OCI-LY7 (cell line): ENCODE measurements at regions of chr7 and their contacts with region 1.

Region 1: DNA sequence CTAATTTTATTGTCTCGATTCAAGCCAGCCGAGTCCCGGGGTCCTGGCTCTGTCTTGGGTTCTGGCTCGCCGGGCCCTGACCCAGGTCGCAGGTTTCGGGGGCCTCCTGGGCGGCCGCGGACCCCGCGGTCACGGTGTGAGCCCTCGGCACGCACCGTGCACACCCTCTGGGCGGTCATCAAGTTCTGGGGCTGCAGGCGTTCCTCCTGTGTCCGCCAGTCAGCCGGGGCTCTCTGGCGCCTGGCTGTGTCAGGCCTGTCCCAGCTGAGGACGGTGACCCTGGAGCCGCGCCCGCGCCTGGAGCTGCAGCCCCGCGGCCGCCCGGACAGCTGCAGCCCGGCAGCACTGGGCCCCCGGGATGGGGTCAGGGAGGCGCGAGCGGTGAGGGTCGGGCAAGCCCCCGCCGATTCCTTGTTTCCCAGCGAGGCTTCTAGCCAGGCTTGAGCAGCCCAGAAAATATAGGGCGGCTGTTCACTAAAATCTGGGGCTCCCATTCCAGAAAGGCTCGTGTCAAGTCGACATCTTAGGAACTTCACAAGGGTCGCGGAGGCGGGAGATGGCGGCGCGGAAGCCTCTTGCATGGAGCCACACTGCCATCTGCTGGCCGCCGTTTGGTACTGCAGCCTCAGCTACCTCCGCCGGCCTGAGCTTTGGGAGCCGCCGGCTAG is 4.2 kb upstream of the HOXA7 start:
- DNase-seq: peak; percentile 88
- H3K4me3 ChIP-seq: peak overlapping the region; percentile 67
- H3K27ac ChIP-seq: no peak overlapping the region
- H3K4me1 ChIP-seq: peaks cover 15% of the 10 kb centered on the region
- CTCF ChIP-seq: peak; percentile 94

Region 2: GRCh38 chr7:25851332-25852210 is 1309.1 kb before region 1 on chr7:
- CTCF ChIA-PET with region 1: no interaction called
- POLR2A ChIA-PET with region 1: no interaction called
- intact Hi-C with region 1: no loop called
- DNase-seq: peak; percentile 81
- H3K4me3 ChIP-seq: no peak overlapping the region
- H3K27ac ChIP-seq: no peak overlapping the region
- H3K4me1 ChIP-seq: peaks cover 16% of the 10 kb centered on the region
- CTCF ChIP-seq: peak; percentile 99

Region 3: DNA sequence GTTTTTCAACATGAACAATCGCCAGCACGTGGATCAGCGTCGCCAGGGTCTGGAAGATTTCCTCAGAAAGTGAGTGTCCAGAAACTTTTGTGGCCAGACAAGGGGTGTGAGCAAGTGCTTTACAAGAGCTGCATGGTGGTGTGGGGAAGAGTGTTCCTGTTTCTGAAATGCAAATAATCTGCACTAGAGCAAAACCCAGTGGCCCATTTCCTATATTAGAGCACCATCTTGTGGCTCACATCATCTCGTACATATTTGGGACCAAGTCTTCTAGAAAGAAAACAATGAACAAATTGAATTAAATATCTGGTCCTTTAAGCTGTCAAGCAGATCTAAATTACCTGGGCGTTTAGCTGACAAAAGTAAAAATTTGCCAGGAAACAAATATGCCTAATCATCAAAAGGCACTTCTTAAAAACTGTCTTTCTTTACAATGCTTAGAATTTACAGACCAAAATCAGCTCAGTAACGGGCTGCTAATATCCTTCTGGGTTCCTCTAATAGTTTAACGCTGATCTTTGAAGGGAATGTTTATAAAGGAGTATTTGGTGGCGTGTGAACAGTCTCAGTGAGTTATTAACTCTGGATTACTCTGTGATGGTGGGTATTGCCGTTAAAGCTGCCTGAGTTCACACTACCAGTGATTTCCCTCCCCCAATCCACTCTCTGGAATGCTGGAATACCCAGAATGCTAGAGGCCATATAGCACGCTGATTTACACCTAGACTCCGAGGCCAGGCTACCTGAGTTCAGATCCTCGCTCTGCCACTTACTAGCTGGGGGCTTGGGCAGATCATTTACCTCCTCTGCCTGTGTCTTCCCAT is 795.4 kb before region 1 on chr7:
- CTCF ChIA-PET with region 1: no interaction called
- POLR2A ChIA-PET with region 1: no interaction called
- intact Hi-C with region 1: loop called (anchors 1 kb)
- DNase-seq: peak; percentile 89
- H3K4me3 ChIP-seq: no peak overlapping the region
- H3K27ac ChIP-seq: peak overlapping the region; percentile 29
- H3K4me1 ChIP-seq: peaks cover 21% of the 10 kb centered on the region
- CTCF ChIP-seq: peak; percentile 93

Region 4: GRCh38 chr7:26500749-26501352 is 659.8 kb before region 1 on chr7:
- CTCF ChIA-PET with region 1: no interaction called
- POLR2A ChIA-PET with region 1: no interaction called
- intact Hi-C with region 1: loop called (anchors 5 kb)
- DNase-seq: peak; percentile 72
- H3K4me3 ChIP-seq: no peak overlapping the region
- H3K27ac ChIP-seq: no peak overlapping the region
- H3K4me1 ChIP-seq: no peaks in the 10 kb centered on the region
- CTCF ChIP-seq: peak; percentile 90

Region 5: DNA sequence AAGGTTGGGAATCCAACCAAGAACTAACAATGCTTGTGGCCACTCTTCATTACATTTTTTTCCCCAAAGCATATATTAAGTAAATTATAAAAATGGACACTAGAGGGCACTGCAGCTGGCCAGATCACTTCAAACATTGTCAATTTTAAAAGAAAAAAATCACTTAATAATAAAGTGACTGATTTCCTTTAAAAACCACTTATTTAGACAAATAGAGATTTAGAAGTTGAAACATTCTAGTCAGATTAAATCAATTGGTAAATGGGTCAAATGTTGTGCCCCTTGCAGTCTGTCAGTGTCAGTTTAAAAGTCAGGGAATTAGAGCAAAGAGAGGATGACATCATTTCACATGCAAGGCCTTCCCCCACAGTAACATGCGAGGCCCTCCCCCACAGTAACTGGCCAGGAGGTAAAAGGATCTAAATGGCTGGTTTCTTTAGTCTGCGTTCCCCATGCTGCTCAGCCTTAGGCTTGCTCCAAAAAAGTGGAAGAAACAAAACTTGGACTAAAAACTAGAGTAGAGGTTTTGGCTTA is 474.2 kb before region 1 on chr7:
- CTCF ChIA-PET with region 1: interaction called, 4 read pairs
- POLR2A ChIA-PET with region 1: no interaction called
- intact Hi-C with region 1: loop called (anchors 1 kb)
- DNase-seq: peak; percentile 45
- H3K4me3 ChIP-seq: no peak overlapping the region
- H3K27ac ChIP-seq: no peak overlapping the region
- H3K4me1 ChIP-seq: peaks cover 12% of the 10 kb centered on the region
- CTCF ChIP-seq: peak; percentile 93

Region 6: DNA sequence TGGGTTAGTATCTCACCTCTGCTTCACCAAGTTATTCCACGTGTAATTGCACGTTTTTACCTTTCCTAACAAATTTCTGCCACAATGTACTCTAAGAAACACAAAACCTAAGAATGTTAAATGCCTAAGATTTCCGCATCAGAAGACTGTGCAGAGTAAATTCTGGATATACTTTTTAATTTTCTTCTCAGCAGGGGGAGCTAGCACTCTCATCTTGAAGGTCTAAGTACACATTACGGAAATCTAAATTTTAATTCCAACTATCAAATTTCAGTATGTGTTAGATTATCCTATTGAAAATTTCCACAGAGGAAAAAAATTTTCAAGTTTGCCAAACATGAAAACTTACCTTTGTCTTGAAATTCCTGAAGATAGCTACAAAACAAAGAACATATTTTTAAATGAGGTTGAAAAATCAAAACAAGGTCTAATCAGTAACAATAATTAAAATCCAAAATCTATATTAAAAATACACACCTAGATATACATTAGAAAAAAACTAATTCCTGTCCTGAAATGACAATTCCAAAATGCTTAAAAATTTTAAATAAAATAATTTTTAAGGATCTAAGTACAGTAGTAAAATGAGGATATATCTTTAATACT is 306.8 kb before region 1 on chr7:
- CTCF ChIA-PET with region 1: interaction called, 4 read pairs
- POLR2A ChIA-PET with region 1: no interaction called
- intact Hi-C with region 1: loop called (anchors 2 kb)
- DNase-seq: peak; percentile 53
- H3K4me3 ChIP-seq: no peak overlapping the region
- H3K27ac ChIP-seq: no peak overlapping the region
- H3K4me1 ChIP-seq: no peaks in the 10 kb centered on the region
- CTCF ChIP-seq: peak; percentile 89

Region 7: GRCh38 chr7:27224983-27225934 is 64.6 kb after region 1 on chr7:
- CTCF ChIA-PET with region 1: no interaction called
- POLR2A ChIA-PET with region 1: no interaction called
- intact Hi-C with region 1: no loop called
- DNase-seq: no peak
- H3K4me3 ChIP-seq: no peak overlapping the region
- H3K27ac ChIP-seq: no peak overlapping the region
- H3K4me1 ChIP-seq: no peaks in the 10 kb centered on the region
- CTCF ChIP-seq: no peak

Region 8: DNA sequence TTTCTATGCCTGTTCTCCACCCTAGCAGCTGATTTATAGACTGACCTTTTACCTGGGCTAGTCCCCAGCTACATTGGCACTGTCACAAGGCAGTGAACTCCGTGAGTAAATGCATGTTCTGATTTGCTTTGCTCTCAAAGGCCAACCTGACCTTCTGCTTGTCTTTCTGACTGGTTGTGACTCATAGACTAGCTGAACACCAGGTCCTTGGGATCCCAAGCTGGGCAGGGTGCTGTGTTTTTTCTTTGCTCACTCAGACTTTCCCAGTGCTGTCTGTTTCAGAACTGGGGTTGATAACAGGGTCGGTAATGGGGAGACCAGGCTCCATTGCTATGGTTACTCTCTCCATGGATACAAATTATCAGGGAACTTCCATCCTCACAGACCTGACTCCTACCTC is 116.9 kb after region 1 on chr7:
- CTCF ChIA-PET with region 1: no interaction called
- POLR2A ChIA-PET with region 1: no interaction called
- intact Hi-C with region 1: no loop called
- DNase-seq: no peak
- H3K4me3 ChIP-seq: no peak overlapping the region
- H3K27ac ChIP-seq: no peak overlapping the region
- H3K4me1 ChIP-seq: no peaks in the 10 kb centered on the region
- CTCF ChIP-seq: no peak